ENCODE measurements at regions of chrX and their contacts with region 1.

Region 1: DNA sequence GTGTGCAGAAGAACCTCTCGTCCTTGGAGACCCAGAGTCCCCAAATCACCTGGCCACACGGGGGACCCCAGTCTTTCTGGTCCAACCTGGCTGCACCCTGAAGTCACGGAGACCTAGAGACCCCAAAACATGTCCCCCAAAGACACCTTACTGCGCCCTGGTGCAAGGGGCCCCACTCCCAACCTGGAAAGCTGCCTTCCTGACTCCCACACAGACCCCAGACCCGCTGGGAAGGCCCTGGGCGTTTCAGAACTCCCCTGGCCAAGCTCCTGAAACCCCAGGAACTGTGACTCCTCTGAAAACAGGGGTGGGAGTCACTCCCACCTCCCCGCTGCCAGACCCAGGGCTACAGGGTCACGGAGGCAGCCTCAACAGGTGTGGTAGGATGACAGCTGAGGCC is 12.7 kb upstream of the SHOX start:
- DNase-seq: no peak
- ATAC-seq: no peak
- H3K4me3 ChIP-seq: no peak overlapping the region
- H3K27ac ChIP-seq: no peak overlapping the region
- H3K4me1 ChIP-seq: no peaks in the 10 kb centered on the region
- H3K27me3 ChIP-seq: peaks cover 6 to 71% (median 27%) of the 10 kb centered on the region in 9 donors
- CTCF ChIP-seq: no peak
- POLR2A ChIP-seq: no peak

Region 2: DNA sequence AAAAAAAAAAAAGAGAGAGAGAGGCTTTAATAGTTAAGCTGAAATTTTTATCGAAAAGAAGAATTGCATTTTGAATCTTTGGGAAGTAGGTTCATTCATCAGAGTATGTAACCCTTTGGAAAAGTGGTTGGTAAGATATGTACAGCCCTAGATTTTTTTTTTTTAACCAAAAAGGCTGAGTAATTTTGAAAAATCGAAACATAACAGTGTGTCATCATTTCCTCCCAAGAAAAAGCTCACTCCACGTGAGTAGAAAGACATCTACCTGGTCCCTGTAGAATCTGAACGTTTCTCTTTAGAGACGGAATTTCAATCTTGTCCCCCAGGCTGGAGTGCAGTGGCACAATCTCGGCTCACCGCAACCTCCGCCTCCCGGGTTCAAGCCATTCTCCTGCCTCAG is 28.9 kb after region 1 on chrX:
- intact Hi-C with region 1: loop called in 1 of 10 experiments (anchors 2 kb)
- DNase-seq: no peak
- ATAC-seq: no peak
- H3K4me3 ChIP-seq: no peak overlapping the region
- H3K27ac ChIP-seq: no peak overlapping the region
- H3K4me1 ChIP-seq: peaks cover 0 to 6% (median 0%) of the 10 kb centered on the region in 12 donors
- H3K27me3 ChIP-seq: peaks cover 9 to 38% (median 32%) of the 10 kb centered on the region in 9 donors
- CTCF ChIP-seq: no peak
- POLR2A ChIP-seq: no peak